ENCODE measurements at regions of chr11 and their contacts with region 1.

Region 1: GRCh38 chr11:68542617-68543016 is 82.1 kb downstream of the PPP6R3 start:
- DNase-seq: peak; percentile 83
- H3K4me3 ChIP-seq: no peak overlapping the region
- H3K27ac ChIP-seq: peak overlapping the region; percentile 56 to 81 (median 65)
- H3K4me1 ChIP-seq: peaks cover 4 to 61% (median 50%) of the 10 kb centered on the region in 4 donors
- H3K27me3 ChIP-seq: no peaks in the 10 kb centered on the region
- CTCF ChIP-seq: no peak
- EP300 ChIP-seq: no peak
- POLR2A ChIP-seq: no peak

Region 2: GRCh38 chr11:68506908-68507307 is 35.7 kb before region 1 on chr11:
- intact Hi-C with region 1: loop called (anchors 5 kb)
- DNase-seq: no peak
- H3K4me3 ChIP-seq: no peak overlapping the region
- H3K27ac ChIP-seq: peak overlapping the region in 2 of 4 donors; percentile 7 to 73
- H3K4me1 ChIP-seq: peaks cover 5 to 99% (median 92%) of the 10 kb centered on the region in 4 donors
- H3K27me3 ChIP-seq: no peaks in the 10 kb centered on the region
- CTCF ChIP-seq: no peak
- EP300 ChIP-seq: no peak
- POLR2A ChIP-seq: no peak

Region 3: GRCh38 chr11:68617925-68618809 is 75.5 kb after region 1 on chr11:
- intact Hi-C with region 1: no loop called
- DNase-seq: no peak
- H3K4me3 ChIP-seq: no peak overlapping the region
- H3K27ac ChIP-seq: no peak overlapping the region
- H3K4me1 ChIP-seq: no peaks in the 10 kb centered on the region
- H3K27me3 ChIP-seq: no peaks in the 10 kb centered on the region
- CTCF ChIP-seq: no peak
- EP300 ChIP-seq: no peak
- POLR2A ChIP-seq: no peak

Measured in sigmoid colon (tissue), 7 donors.